ENCODE measurements at regions of chr16 and their contacts with region 1.

Region 1: DNA sequence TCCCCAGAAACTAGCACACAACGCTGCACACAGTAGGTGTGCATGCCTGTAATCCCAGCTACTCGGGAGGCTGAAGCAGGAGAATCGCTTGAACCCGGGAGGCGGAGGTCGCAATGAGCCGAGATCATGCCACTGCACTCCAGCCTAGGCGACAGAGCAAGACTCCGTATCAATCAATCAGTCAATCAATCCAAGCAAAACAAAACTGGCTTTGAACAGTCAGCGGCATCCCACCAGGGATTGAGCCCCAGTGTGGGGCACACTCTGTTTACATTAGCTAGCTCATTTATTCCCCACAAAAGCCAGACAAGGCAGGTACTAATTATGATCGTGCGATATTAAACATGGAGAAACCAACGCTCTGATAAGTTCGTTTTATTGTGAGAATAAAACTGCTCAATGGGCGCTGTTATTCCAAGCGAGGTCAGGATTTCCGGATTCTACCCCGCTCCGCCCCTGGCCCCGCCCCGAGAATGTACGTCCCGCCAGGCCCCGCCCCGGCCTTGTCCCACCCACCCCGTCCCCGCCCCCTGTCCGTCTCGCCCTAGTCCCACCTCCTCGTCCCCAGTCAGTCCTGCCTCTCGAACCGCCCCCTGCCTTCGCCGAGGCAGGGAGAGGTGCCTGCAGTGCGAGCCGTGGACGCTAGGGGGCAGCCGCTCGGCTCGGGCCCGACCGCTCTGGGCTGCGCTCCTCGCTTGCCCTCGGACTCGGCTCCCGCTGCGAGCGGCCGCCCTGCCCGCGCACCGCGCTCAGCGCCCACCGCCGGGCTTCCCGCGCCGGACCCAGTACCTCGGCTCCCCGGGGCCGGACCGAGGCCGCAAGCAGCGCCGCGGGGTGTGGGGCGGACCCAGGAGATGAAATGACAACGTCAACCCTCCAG is at the start of gene VPS4A:
- DNase-seq: peak; percentile 99
- ATAC-seq: peak; percentile 98
- H3K4me3 Mint-ChIP-seq: peak within 1 kb of the TSS; percentile 98
- H3K27ac Mint-ChIP-seq: peak within 1 kb of the TSS; percentile 91
- H3K4me1 Mint-ChIP-seq: peaks cover 27% of the 10 kb centered on the region
- H3K27me3 Mint-ChIP-seq: no peaks in the 10 kb centered on the region
- CTCF ChIP-seq: no peak
- total RNA-seq, gene VPS4A: 34.2 and 41.7 TPM in 2 replicates

Region 2: GRCh38 chr16:69105489-69106361 is 205.2 kb before region 1 on chr16 and contains the start of gene HAS3:
- CTCF ChIA-PET with region 1: no interaction called
- POLR2A ChIA-PET with region 1: no interaction called
- intact Hi-C with region 1: no loop called
- DNase-seq: peak; percentile 38
- ATAC-seq: peak; percentile 71
- H3K4me3 Mint-ChIP-seq: peak within 1 kb of the TSS; percentile 86
- H3K27ac Mint-ChIP-seq: peak within 1 kb of the TSS; percentile 66
- H3K4me1 Mint-ChIP-seq: peaks cover 18% of the 10 kb centered on the region
- H3K27me3 Mint-ChIP-seq: peaks cover 34% of the 10 kb centered on the region
- CTCF ChIP-seq: no peak
- total RNA-seq, gene HAS3: 0.71 and 0.82 TPM in 2 replicates

Region 3: DNA sequence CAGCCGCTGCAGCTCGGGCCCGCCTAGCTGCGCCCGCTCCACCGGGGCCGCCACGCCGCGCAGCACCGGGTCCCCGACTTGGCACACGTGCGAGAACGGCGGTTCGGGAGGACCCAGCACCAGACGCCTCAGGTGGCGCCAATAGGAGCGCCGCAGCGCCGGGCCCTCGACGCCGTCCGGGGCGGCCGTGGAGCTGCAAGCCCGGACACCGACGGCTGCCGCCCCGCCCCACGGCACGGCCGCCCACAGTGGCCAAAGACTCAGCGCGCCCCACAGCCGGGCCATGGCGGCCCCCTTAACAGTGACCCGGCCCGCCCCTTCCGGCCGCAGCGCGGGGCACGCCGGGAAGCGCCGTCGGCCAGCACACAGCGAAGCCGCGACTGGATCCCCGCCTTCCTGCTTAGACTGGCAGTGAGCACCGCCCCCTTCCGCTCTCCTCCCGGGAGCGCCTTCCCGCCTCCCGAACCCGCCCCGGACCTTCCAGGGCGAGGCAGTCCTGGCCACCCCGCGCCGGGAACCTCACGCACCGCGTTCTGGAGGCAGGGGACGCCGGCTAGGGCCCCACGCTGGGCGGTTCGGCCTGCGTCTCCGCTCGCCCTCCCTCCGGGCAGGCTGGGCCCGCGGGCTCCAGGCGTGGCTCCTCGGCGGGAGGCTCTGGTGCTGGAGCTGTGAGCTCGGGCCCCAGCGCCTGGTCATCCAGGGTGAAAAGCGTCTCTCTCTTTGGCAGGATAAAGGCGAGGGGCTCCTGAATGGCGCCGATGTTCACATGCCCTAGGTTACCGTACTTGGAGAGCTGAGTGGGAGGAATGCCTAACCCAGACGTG is 19.6 kb after region 1 on chr16 and contains the start of gene PDF:
- CTCF ChIA-PET with region 1: interaction called, 5 read pairs
- POLR2A ChIA-PET with region 1: interaction called, 16 read pairs
- intact Hi-C with region 1: loop called (anchors 1 kb)
- DNase-seq: peak; percentile 85
- ATAC-seq: peak; percentile 96
- H3K4me3 Mint-ChIP-seq: peak within 1 kb of the TSS; percentile 84
- H3K27ac Mint-ChIP-seq: peak within 1 kb of the TSS; percentile 71
- H3K4me1 Mint-ChIP-seq: peaks cover 38% of the 10 kb centered on the region
- H3K27me3 Mint-ChIP-seq: no peaks in the 10 kb centered on the region
- CTCF ChIP-seq: no peak
- total RNA-seq, gene PDF: 11.1 and 15.3 TPM in 2 replicates

Region 4: DNA sequence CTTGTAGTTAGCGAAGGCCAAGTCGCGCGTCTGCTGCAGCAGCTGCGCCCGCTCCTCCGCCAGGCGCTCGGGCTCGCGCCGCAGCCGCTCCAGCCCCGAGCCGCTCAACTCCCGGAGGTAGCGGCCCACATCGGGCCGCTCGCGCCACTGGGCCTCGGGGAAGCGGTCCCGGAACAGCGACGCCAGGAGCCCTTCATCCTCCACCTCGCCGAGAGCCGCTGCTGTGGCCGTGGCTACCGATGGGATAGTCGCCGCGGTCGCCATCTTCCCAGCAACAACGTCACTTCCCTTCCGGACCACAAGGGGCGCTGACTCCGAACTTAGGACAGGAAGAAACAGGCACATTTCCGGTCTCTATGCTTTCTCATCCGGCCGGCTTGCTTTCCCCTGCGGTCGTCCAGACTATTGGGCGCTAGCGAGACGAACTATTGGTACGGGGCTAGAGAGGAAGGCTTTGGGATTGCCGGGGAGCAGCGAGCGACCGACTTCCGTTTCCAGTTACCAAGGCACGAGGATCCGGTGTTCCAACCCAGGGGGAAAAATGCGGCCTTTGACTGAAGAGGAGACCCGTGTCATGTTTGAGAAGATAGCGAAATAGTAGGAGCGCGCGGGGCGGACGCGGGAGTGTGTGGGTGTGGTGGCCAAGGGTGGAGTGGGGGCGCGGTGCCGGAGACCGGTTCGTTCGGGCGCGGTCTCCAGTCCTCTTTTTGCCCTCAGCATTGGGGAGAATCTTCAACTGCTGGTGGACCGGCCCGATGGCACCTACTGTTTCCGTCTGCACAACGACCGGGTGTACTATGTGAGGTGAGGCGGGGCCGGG is 28.6 kb after region 1 on chr16 and contains the starts of genes COG8 and NIP7:
- CTCF ChIA-PET with region 1: interaction called, 5 read pairs
- POLR2A ChIA-PET with region 1: interaction called, 6 read pairs
- intact Hi-C with region 1: loop called (anchors 1 kb)
- DNase-seq: peak; percentile 87
- ATAC-seq: peak; percentile 91
- H3K4me3 Mint-ChIP-seq: peak within 1 kb of the TSS; percentile 100
- H3K27ac Mint-ChIP-seq: peak within 1 kb of the TSS; percentile 99
- H3K4me1 Mint-ChIP-seq: peaks cover 39% of the 10 kb centered on the region
- H3K27me3 Mint-ChIP-seq: no peaks in the 10 kb centered on the region
- CTCF ChIP-seq: no peak
- total RNA-seq, gene COG8: 40.5 and 45.4 TPM in 2 replicates
- total RNA-seq, gene NIP7: 42.4 and 44.3 TPM in 2 replicates